Activated CD4-positive, alpha-beta memory T cell treated with anti-CD3 and anti-CD28 coated beads, Interleukin-2, amount 10 ng/mL, durations not matched to agents 7 days and 5 days (primary cell): ENCODE measurements at regions of chr1 and their contacts with region 1.

Region 1: GRCh38 chr1:168234846-168235547 is 9.2 kb downstream of the SFT2D2 start:
- DNase-seq: peak; percentile 65
- H3K4me3 Mint-ChIP-seq: no peak overlapping the region
- H3K27ac Mint-ChIP-seq: peak overlapping the region; percentile 68
- H3K4me1 Mint-ChIP-seq: peaks cover 64% of the 10 kb centered on the region
- H3K27me3 Mint-ChIP-seq: no peaks in the 10 kb centered on the region

Region 2: DNA sequence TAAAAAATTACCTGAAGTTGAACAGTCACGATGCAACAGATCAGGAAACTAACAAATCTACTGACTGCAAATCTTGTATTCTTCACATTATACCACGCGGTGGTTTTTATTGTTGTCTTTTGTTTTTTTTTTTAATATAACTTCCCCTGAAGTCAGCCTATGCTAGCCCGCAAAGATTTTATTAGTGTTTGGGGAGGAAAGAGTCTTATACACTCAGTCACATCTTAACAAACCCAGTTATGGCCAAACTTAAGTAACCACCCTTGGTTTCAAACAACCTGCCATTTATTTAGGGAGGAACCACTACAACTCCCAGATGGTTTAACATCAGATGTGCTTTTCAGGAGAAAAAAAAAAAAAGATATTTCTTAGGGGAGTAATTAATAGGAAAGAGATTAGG is 83.1 kb before region 1 on chr1:
- CTCF ChIA-PET with region 1: no interaction called
- POLR2A ChIA-PET with region 1: no interaction called
- DNase-seq: no peak
- H3K4me3 Mint-ChIP-seq: no peak overlapping the region
- H3K27ac Mint-ChIP-seq: no peak overlapping the region
- H3K4me1 Mint-ChIP-seq: peaks cover 4% of the 10 kb centered on the region
- H3K27me3 Mint-ChIP-seq: peaks cover 14% of the 10 kb centered on the region

Region 3: GRCh38 chr1:168178638-168179437 is 56.2 kb before region 1 on chr1 and contains the start of gene TIPRL:
- CTCF ChIA-PET with region 1: interaction called, 10 read pairs
- POLR2A ChIA-PET with region 1: interaction called, 7 read pairs
- DNase-seq: peak; percentile 96
- H3K4me3 Mint-ChIP-seq: no peak within 1 kb of the TSS
- H3K27ac Mint-ChIP-seq: no peak within 1 kb of the TSS
- H3K4me1 Mint-ChIP-seq: peaks cover 14% of the 10 kb centered on the region
- H3K27me3 Mint-ChIP-seq: peaks cover 3% of the 10 kb centered on the region
- total RNA-seq, gene TIPRL: 47.1 to 48.4 TPM

Region 4: GRCh38 chr1:168246506-168246905 is 11.5 kb after region 1 on chr1:
- CTCF ChIA-PET with region 1: interaction called, 15 read pairs
- POLR2A ChIA-PET with region 1: interaction called, 5 read pairs
- DNase-seq: no peak
- H3K4me3 Mint-ChIP-seq: no peak overlapping the region
- H3K27ac Mint-ChIP-seq: no peak overlapping the region
- H3K4me1 Mint-ChIP-seq: peaks cover 40% of the 10 kb centered on the region
- H3K27me3 Mint-ChIP-seq: no peaks in the 10 kb centered on the region

Region 5: GRCh38 chr1:168360151-168361021 is 125.4 kb after region 1 on chr1:
- CTCF ChIA-PET with region 1: interaction called, 16 read pairs
- POLR2A ChIA-PET with region 1: interaction called, 4 read pairs
- DNase-seq: peak; percentile 81
- H3K4me3 Mint-ChIP-seq: no peak overlapping the region
- H3K27ac Mint-ChIP-seq: peak overlapping the region; percentile 72
- H3K4me1 Mint-ChIP-seq: peaks cover 59% of the 10 kb centered on the region
- H3K27me3 Mint-ChIP-seq: no peaks in the 10 kb centered on the region